ENCODE measurements at regions of chr9 and their contacts with region 1.

Region 1: DNA sequence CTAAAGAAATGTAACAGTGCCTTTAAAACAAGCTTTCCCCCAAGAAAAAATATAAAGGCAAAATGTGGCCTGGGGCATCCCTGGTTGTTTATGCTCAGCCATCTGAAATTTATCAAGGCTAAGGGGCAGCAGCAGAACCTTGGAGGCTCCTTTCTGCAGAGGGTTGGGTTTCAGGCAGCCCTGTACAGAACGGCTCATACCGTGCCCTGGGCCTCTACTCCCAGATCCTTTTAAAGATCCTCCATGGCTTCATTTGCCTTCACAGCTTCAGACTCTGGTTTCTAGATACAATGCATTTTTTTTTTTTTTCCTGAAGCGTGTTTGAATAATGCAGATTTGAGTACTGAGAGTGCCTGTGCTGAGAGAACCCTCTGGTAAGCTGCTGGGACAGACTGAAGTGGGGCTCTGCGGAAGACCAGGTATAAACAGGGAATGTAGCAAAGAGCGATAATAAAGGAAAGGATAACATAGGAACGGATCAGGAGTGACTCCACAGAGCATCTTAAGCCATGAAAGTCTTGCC is 172.7 kb downstream of the DIRAS2 start:
- DNase-seq: no peak
- H3K4me3 ChIP-seq: no peak overlapping the region
- CTCF ChIP-seq: no peak
- POLR2A ChIP-seq: no peak

Region 2: GRCh38 chr9:89042984-89043383 is 1426.9 kb before region 1 on chr9:
- intact Hi-C with region 1: loop called (anchors 5 kb)
- DNase-seq: no peak
- H3K4me3 ChIP-seq: no peak overlapping the region
- CTCF ChIP-seq: no peak
- POLR2A ChIP-seq: no peak

Measured in lower leg skin (tissue), 4 donors.